CD4-positive, alpha-beta memory T cell (primary cell): ENCODE measurements at regions of chr5 and their contacts with region 1.

Region 1: GRCh38 chr5:159100025-159100781 is 487 bp upstream of the EBF1 start:
- DNase-seq: peak; percentile 78 to 84 (median 81)
- H3K4me3 ChIP-seq: peak overlapping the region; percentile 23 to 46
- H3K4me3 Mint-ChIP-seq: peak overlapping the region; percentile 87 to 95 (median 90)
- H3K27ac ChIP-seq: no peak overlapping the region
- H3K27ac Mint-ChIP-seq: peak overlapping the region; percentile 82 to 96 (median 90)
- H3K4me1 ChIP-seq: peaks cover 39% of the 10 kb centered on the region
- H3K4me1 Mint-ChIP-seq: peaks cover 21 to 51% (median 34%) of the 10 kb centered on the region in 4 donors
- H3K27me3 ChIP-seq: peaks cover 14% of the 10 kb centered on the region
- H3K27me3 Mint-ChIP-seq: peaks cover 44 to 46% of the 10 kb centered on the region in 2 donors

Region 2: DNA sequence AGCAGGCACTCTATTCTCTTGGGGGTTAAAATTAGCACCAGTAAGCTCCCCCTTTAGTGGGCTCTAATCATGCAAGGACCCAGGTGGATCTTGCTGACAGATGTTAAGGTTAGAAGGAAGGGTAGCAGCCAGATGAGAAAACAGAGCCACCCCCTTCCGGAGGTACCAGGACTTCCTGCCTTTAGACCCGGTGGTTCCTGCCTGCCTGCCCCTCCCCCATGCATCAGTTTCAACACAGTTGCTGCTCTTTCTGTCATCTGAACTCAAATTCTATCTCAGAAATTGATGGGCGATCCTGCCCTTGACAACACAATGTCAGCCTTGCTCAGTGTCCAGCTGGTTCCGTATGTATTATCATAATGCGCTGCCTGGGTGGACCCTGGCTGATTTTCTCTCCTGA is 287.8 kb before region 1 on chr5:
- CTCF ChIA-PET with region 1: no interaction called
- POLR2A ChIA-PET with region 1: no interaction called
- intact Hi-C with region 1: loop called (anchors 5 kb)
- DNase-seq: peak; percentile 34 to 52 (median 48)
- H3K4me3 ChIP-seq: no peak overlapping the region
- H3K4me3 Mint-ChIP-seq: peak overlapping the region; percentile 24 to 72 (median 46)
- H3K27ac ChIP-seq: no peak overlapping the region
- H3K27ac Mint-ChIP-seq: peak overlapping the region in 2 of 7 donors; percentile 28 to 48
- H3K4me1 ChIP-seq: peaks cover 11% of the 10 kb centered on the region
- H3K4me1 Mint-ChIP-seq: peaks cover 15 to 25% (median 25%) of the 10 kb centered on the region in 4 donors
- H3K27me3 ChIP-seq: no peaks in the 10 kb centered on the region
- H3K27me3 Mint-ChIP-seq: peaks cover 3 to 9% of the 10 kb centered on the region in 2 donors

Region 3: GRCh38 chr5:158875272-158875679 is 224.9 kb before region 1 on chr5:
- CTCF ChIA-PET with region 1: no interaction called
- POLR2A ChIA-PET with region 1: no interaction called
- intact Hi-C with region 1: loop called (anchors 5 kb)
- DNase-seq: peak in 3 of 5 donors; percentile 8 to 15 (median 12)
- H3K4me3 ChIP-seq: peak overlapping the region; percentile 11 to 34
- H3K4me3 Mint-ChIP-seq: peak overlapping the region; percentile 77 to 95 (median 87)
- H3K27ac ChIP-seq: no peak overlapping the region
- H3K27ac Mint-ChIP-seq: peak overlapping the region; percentile 14 to 94 (median 85)
- H3K4me1 ChIP-seq: peaks cover 13% of the 10 kb centered on the region
- H3K4me1 Mint-ChIP-seq: peaks cover 14 to 24% (median 19%) of the 10 kb centered on the region in 4 donors
- H3K27me3 ChIP-seq: no peaks in the 10 kb centered on the region
- H3K27me3 Mint-ChIP-seq: peaks cover 2 to 5% of the 10 kb centered on the region in 2 donors

Region 4: DNA sequence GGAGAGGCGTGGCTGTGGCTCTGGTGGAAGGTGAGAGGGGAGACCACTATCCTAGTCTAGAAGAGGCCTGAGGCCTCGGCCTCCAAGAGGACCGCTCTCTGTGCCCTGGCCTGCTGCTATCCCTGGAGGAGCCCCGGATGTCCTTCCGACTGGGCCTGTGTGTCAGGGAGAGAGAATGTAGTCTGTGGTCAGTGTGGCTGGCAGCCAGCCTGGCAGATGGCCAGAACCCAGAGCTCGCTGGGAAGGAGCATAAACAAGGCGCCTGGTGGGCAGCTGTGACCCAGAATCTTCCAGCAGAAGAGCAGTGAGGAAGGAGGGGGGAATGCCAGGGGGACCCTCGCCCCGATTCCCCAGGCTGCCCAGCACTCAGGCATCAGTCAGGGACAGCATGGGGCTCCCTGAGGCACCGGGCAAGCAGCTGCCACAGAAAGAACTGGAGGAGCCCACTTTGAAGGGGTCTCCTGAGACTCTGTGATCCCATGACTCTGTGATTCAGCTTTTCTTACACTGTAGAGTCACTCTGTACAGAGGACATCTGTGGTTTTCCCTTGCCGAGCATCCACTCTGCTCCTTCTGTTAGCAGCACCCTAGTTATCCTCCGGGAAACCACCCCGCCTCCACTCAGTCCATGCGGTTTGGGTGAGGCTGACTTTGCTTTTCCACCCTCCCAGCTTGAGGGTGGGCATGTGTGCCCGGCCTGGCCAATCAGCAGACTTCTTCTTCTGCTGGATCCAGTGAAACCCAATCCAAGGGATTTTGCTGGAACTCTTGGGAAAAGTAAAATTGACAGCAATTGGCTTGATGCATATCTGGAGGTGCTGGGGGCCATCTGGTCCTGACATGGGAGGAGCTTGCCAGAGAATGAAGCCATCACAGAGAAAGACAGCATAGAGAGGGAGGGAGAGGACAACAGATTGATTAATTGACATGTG is 1065.2 kb after region 1 on chr5:
- CTCF ChIA-PET with region 1: no interaction called
- POLR2A ChIA-PET with region 1: no interaction called
- intact Hi-C with region 1: no loop called
- DNase-seq: no peak
- H3K4me3 ChIP-seq: no peak overlapping the region
- H3K4me3 Mint-ChIP-seq: no peak overlapping the region
- H3K27ac ChIP-seq: no peak overlapping the region
- H3K27ac Mint-ChIP-seq: no peak overlapping the region
- H3K4me1 ChIP-seq: no peaks in the 10 kb centered on the region
- H3K4me1 Mint-ChIP-seq: peaks cover 0 to 5% (median 2%) of the 10 kb centered on the region in 4 donors
- H3K27me3 ChIP-seq: no peaks in the 10 kb centered on the region
- H3K27me3 Mint-ChIP-seq: peaks cover 15 to 26% of the 10 kb centered on the region in 2 donors